CD8-positive, alpha-beta T cell (primary cell): ENCODE measurements at regions of chr10 and their contacts with region 1.

Region 1: DNA sequence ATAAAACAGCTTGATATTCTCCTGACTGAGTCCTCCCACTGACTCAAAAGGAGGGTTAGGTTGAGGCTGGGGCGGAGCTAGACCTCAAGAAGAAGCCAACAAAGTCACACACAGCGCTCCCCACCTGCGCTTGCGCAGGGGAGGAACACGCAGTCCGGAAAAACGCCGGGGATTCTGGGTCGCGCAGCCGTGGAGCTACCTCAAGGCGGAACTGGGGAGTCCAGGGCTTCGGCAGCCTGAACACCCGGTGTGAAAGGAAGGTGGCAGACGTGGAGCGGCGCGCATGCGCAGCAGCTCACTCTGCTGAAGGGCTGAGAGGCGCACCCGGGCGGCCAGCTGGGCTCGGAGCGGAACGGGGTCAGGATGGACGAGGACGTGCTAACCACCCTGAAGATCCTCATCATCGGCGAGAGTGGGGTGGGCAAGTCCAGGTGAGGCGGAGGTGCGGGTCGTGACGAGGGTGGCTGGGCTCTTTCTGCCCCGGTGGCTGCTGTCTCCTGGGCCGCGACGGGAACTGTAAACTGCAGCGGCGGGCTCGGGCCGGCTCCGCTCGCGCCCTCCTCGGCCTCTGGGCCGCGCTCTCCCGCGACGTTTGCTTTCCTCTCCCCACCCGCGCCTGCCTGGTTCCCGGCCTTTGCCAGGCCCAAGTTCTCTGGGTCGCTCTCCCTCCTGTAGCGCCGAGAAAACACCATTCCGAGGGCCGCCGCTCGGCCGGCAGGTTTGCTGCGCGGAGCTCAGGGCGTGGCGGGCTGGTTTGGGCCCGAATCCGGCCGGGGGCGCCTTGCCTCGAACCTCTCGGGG is at the start of gene RAB18:
- DNase-seq: peak; percentile 94 to 99 (median 98)
- ATAC-seq: peak; percentile 95
- H3K4me3 ChIP-seq: peak within 1 kb of the TSS; percentile 73 to 82
- H3K4me3 Mint-ChIP-seq: peak within 1 kb of the TSS; percentile 99
- H3K27ac ChIP-seq: peak within 1 kb of the TSS; percentile 81 to 90
- H3K27ac Mint-ChIP-seq: peak within 1 kb of the TSS; percentile 98
- H3K4me1 ChIP-seq: peaks cover 33% of the 10 kb centered on the region
- H3K4me1 Mint-ChIP-seq: peaks cover 52% of the 10 kb centered on the region
- H3K27me3 ChIP-seq: no peaks in the 10 kb centered on the region
- H3K27me3 Mint-ChIP-seq: no peaks in the 10 kb centered on the region
- CTCF ChIP-seq: no peak
- total RNA-seq, gene RAB18: 130 to 146 TPM

Region 2: DNA sequence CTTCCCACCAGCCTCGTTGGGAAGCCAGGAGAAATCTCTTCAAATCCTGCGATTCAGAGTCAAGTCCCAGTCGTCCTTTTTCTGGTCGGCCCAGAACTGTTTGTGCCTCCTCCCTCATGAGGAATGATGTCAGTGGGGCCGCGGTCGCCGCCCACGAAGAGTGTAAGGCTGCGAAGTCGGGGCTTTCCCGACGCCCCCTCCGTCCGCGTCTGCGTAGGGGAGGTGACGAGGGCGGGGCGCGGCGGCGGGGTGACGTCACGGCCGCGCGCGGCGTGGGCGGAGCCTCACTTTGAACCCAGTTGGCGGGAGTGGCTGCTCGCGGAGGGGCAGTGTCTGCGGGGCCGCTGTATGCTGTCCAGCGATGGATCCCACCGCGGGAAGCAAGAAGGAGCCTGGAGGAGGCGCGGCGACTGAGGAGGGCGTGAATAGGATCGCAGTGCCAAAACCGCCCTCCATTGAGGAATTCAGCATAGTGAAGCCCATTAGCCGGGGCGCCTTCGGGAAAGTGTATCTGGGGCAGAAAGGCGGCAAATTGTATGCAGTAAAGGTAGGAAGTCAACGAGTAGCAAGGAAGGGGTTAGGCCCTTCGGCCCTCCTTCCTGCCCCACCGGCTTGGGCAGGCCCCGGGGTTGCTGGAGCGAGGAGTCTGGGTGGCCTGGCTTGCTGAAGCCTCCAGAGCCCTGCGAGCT is 349.0 kb before region 1 on chr10 and contains the start of gene MASTL:
- CTCF ChIA-PET with region 1: no interaction called
- POLR2A ChIA-PET with region 1: interaction called, 8 read pairs
- intact Hi-C with region 1: loop called (anchors 1 to 5 kb)
- DNase-seq: peak; percentile 90 to 98 (median 93)
- ATAC-seq: peak; percentile 82
- H3K4me3 ChIP-seq: peak within 1 kb of the TSS; percentile 84 to 98
- H3K4me3 Mint-ChIP-seq: peak within 1 kb of the TSS; percentile 99
- H3K27ac ChIP-seq: peak within 1 kb of the TSS; percentile 100
- H3K27ac Mint-ChIP-seq: peak within 1 kb of the TSS; percentile 100
- H3K4me1 ChIP-seq: peaks cover 27% of the 10 kb centered on the region
- H3K4me1 Mint-ChIP-seq: peaks cover 49% of the 10 kb centered on the region
- H3K27me3 ChIP-seq: no peaks in the 10 kb centered on the region
- H3K27me3 Mint-ChIP-seq: no peaks in the 10 kb centered on the region
- CTCF ChIP-seq: no peak
- total RNA-seq, gene MASTL: 33.4 to 33.6 TPM

Region 3: DNA sequence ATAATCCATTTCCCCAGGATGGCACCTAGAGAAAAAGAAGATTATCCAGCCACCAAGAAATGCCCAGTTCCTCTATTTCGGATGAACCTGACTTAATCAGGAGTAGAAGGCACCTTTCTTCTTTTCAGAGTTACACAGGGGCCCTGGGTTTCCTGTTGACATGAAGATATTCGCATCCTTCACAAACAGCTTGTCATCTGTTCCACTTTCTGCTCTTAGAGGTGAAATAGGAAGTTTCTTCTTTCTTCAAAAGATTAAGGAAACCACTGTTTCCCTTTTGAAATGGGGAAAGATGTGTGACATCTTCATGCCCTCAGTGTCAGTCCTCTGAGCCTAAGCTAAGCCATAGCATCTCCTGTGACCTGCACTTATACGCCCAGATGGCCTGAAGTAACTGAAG is 39.2 kb before region 1 on chr10:
- CTCF ChIA-PET with region 1: interaction called, 3 read pairs
- POLR2A ChIA-PET with region 1: interaction called, 10 read pairs
- intact Hi-C with region 1: loop called in 1 of 2 experiments (anchors 1 kb)
- DNase-seq: peak in 4 of 9 experiments; percentile 10 to 54 (median 28)
- ATAC-seq: peak; percentile 88
- H3K4me3 ChIP-seq: no peak overlapping the region
- H3K4me3 Mint-ChIP-seq: peak overlapping the region; percentile 64
- H3K27ac ChIP-seq: peak overlapping the region in 1 of 2 experiments; percentile 68
- H3K27ac Mint-ChIP-seq: peak overlapping the region; percentile 92
- H3K4me1 ChIP-seq: peaks cover 19% of the 10 kb centered on the region
- H3K4me1 Mint-ChIP-seq: peaks cover 37% of the 10 kb centered on the region
- H3K27me3 ChIP-seq: no peaks in the 10 kb centered on the region
- H3K27me3 Mint-ChIP-seq: no peaks in the 10 kb centered on the region
- CTCF ChIP-seq: no peak

Region 4: GRCh38 chr10:27542812-27543211 is 38.6 kb after region 1 on chr10:
- CTCF ChIA-PET with region 1: interaction called, 4 read pairs
- POLR2A ChIA-PET with region 1: interaction called, 3 read pairs
- intact Hi-C with region 1: loop called (anchors 5 kb)
- DNase-seq: no peak
- ATAC-seq: no peak
- H3K4me3 ChIP-seq: no peak overlapping the region
- H3K4me3 Mint-ChIP-seq: no peak overlapping the region
- H3K27ac ChIP-seq: peak overlapping the region in 1 of 2 experiments; percentile 74
- H3K27ac Mint-ChIP-seq: peak overlapping the region; percentile 64
- H3K4me1 ChIP-seq: peaks cover 21% of the 10 kb centered on the region
- H3K4me1 Mint-ChIP-seq: peaks cover 47% of the 10 kb centered on the region
- H3K27me3 ChIP-seq: no peaks in the 10 kb centered on the region
- H3K27me3 Mint-ChIP-seq: no peaks in the 10 kb centered on the region
- CTCF ChIP-seq: no peak

Region 5: GRCh38 chr10:28334296-28334695 is 830.1 kb after region 1 on chr10:
- CTCF ChIA-PET with region 1: no interaction called
- POLR2A ChIA-PET with region 1: interaction called, 6 read pairs
- intact Hi-C with region 1: loop called in 1 of 2 experiments (anchors 10 kb)
- DNase-seq: peak in 8 of 9 experiments; percentile 14 to 98 (median 50)
- ATAC-seq: peak; percentile 61
- H3K4me3 ChIP-seq: peak overlapping the region; percentile 60 to 67
- H3K4me3 Mint-ChIP-seq: peak overlapping the region; percentile 95
- H3K27ac ChIP-seq: peak overlapping the region; percentile 96 to 98
- H3K27ac Mint-ChIP-seq: peak overlapping the region; percentile 100
- H3K4me1 ChIP-seq: peaks cover 64% of the 10 kb centered on the region
- H3K4me1 Mint-ChIP-seq: peaks cover 74% of the 10 kb centered on the region
- H3K27me3 ChIP-seq: no peaks in the 10 kb centered on the region
- H3K27me3 Mint-ChIP-seq: no peaks in the 10 kb centered on the region
- CTCF ChIP-seq: no peak

Region 6: GRCh38 chr10:28532383-28533175 is 1028.4 kb after region 1 on chr10 and contains the start of gene WAC:
- CTCF ChIA-PET with region 1: no interaction called
- POLR2A ChIA-PET with region 1: interaction called, 6 read pairs
- intact Hi-C with region 1: loop called in 1 of 2 experiments (anchors 2 kb)
- DNase-seq: peak; percentile 94 to 99 (median 97)
- ATAC-seq: peak; percentile 79
- H3K4me3 ChIP-seq: peak within 1 kb of the TSS; percentile 74 to 99
- H3K4me3 Mint-ChIP-seq: peak within 1 kb of the TSS; percentile 99
- H3K27ac ChIP-seq: peak within 1 kb of the TSS; percentile 95 to 99
- H3K27ac Mint-ChIP-seq: peak within 1 kb of the TSS; percentile 100
- H3K4me1 ChIP-seq: peaks cover 47% of the 10 kb centered on the region
- H3K4me1 Mint-ChIP-seq: peaks cover 69% of the 10 kb centered on the region
- H3K27me3 ChIP-seq: no peaks in the 10 kb centered on the region
- H3K27me3 Mint-ChIP-seq: no peaks in the 10 kb centered on the region
- CTCF ChIP-seq: no peak
- total RNA-seq, gene WAC: 195 to 200 TPM

Region 7: GRCh38 chr10:29409241-29410057 is 1905.2 kb after region 1 on chr10:
- CTCF ChIA-PET with region 1: no interaction called
- POLR2A ChIA-PET with region 1: no interaction called
- intact Hi-C with region 1: no loop called
- DNase-seq: peak in 8 of 9 experiments; percentile 20 to 66 (median 38)
- ATAC-seq: peak; percentile 62
- H3K4me3 ChIP-seq: peak overlapping the region; percentile 84 to 85
- H3K4me3 Mint-ChIP-seq: peak overlapping the region; percentile 96
- H3K27ac ChIP-seq: peak overlapping the region; percentile 47 to 60
- H3K27ac Mint-ChIP-seq: peak overlapping the region; percentile 92
- H3K4me1 ChIP-seq: peaks cover 6% of the 10 kb centered on the region
- H3K4me1 Mint-ChIP-seq: peaks cover 34% of the 10 kb centered on the region
- H3K27me3 ChIP-seq: no peaks in the 10 kb centered on the region
- H3K27me3 Mint-ChIP-seq: no peaks in the 10 kb centered on the region
- CTCF ChIP-seq: no peak